ENCODE measurements at regions of chr1 and their contacts with region 1.

Region 1: GRCh38 chr1:66446261-66447001 is 87.5 kb upstream of the SGIP1 start:
- DNase-seq: peak; percentile 45
- ATAC-seq: peak; percentile 60
- H3K4me3 Mint-ChIP-seq: peak overlapping the region; percentile 64
- H3K27ac Mint-ChIP-seq: peak overlapping the region; percentile 97
- H3K4me1 Mint-ChIP-seq: peaks cover 33% of the 10 kb centered on the region
- H3K27me3 Mint-ChIP-seq: peaks cover 7% of the 10 kb centered on the region

Region 2: DNA sequence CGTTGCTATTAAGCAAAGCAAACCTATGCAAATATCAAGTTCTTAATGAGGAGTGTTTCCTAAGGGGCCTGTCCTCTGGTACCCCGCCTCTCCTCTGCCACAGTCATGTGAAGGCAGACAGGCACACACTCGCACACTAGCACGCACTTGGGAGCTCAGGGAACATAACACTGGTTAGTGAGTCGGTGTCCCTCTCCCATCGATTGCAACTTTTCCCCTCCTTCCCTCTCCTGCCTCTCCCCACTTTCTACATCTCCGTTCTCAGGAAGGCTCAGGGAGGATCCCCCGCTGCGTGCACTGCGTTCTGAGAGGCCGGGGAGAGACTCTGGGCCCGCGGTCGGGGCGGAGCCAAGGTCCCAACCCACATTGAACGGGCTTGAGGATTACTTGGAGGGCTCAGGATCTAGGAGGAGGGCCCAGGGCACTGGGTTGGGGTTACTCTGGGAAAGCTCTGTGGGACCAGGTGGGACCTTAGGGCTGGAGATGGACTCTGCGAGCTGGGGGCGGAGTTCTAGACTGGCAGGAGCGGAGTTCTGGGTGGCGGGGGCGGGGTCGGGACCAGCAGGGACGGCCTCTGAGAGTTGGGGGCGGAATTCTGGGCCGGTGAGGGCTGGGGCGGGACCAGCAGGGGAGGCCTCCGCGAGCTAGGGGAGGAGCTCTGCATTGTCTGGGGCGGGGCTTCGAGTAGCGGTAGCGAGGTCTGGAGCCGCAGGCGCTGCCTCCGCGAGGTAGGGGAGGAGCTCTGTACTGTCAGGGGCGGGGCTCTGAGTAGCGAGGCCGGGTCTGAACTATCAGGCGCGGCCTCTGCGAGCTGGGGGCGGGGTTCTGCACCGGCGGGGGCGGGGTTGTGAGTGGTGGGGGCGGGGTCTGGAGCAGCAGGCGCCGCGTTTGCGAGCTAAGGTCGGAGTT is 1026.5 kb before region 1 on chr1:
- CTCF ChIA-PET with region 1: no interaction called
- POLR2A ChIA-PET with region 1: no interaction called
- intact Hi-C with region 1: loop called in 1 of 2 experiments (anchors 10 kb)
- DNase-seq: peak; percentile 99
- ATAC-seq: peak; percentile 96
- H3K4me3 Mint-ChIP-seq: no peak overlapping the region
- H3K27ac Mint-ChIP-seq: peak overlapping the region; percentile 94
- H3K4me1 Mint-ChIP-seq: peaks cover 13% of the 10 kb centered on the region
- H3K27me3 Mint-ChIP-seq: no peaks in the 10 kb centered on the region

Region 3: DNA sequence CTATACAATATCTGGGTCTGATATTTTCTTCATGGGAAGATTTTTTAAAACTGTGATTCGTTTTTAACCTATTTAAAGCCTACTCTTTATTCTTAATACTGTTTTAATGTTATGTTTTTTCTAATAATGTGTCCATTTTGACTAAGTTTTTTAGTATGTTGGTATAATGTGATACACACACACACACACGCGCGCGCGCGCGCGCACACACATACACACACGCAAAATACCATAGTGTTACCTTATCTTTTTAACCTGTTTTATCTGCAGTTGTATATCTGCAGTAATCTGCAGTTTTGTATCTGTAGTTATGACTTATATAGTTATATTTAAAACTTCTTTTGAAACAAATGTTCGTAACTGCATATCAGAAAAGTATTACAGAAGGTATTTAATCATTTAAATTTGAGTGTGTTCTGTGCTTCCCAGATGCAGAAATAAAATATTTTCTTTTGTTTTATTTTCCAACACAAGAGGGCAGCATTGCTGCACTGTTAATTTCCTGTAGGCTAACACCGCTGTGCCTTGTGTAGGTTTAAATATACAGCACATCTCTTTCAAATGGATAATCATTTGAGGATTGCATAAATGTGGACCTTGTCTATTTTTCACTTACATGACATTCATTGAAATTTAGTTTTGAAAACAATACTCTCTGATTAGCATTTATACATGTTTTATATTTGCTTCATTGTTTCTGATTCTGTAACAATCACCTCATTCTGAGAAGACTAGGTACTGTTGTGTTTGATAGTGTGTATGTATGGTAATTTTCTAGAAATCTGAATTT is 487.7 kb before region 1 on chr1:
- CTCF ChIA-PET with region 1: interaction called, 22 read pairs
- POLR2A ChIA-PET with region 1: no interaction called
- intact Hi-C with region 1: loop called (anchors 1 kb)
- DNase-seq: peak; percentile 23
- ATAC-seq: peak; percentile 70
- H3K4me3 Mint-ChIP-seq: no peak overlapping the region
- H3K27ac Mint-ChIP-seq: no peak overlapping the region
- H3K4me1 Mint-ChIP-seq: no peaks in the 10 kb centered on the region
- H3K27me3 Mint-ChIP-seq: no peaks in the 10 kb centered on the region

Region 4: GRCh38 chr1:66258404-66259105 is 187.9 kb before region 1 on chr1:
- CTCF ChIA-PET with region 1: interaction called, 359 read pairs
- POLR2A ChIA-PET with region 1: interaction called, 4 read pairs
- intact Hi-C with region 1: loop called (anchors 1 kb)
- DNase-seq: no peak
- ATAC-seq: peak; percentile 91
- H3K4me3 Mint-ChIP-seq: no peak overlapping the region
- H3K27ac Mint-ChIP-seq: peak overlapping the region; percentile 68
- H3K4me1 Mint-ChIP-seq: peaks cover 90% of the 10 kb centered on the region
- H3K27me3 Mint-ChIP-seq: no peaks in the 10 kb centered on the region

Region 5: GRCh38 chr1:66331657-66332547 is 114.5 kb before region 1 on chr1:
- CTCF ChIA-PET with region 1: interaction called, 15 read pairs
- POLR2A ChIA-PET with region 1: interaction called, 4 read pairs
- intact Hi-C with region 1: loop called (anchors 2 kb)
- DNase-seq: peak; percentile 75
- ATAC-seq: peak; percentile 40
- H3K4me3 Mint-ChIP-seq: peak overlapping the region; percentile 91
- H3K27ac Mint-ChIP-seq: peak overlapping the region; percentile 98
- H3K4me1 Mint-ChIP-seq: peaks cover 44% of the 10 kb centered on the region
- H3K27me3 Mint-ChIP-seq: no peaks in the 10 kb centered on the region

Region 6: DNA sequence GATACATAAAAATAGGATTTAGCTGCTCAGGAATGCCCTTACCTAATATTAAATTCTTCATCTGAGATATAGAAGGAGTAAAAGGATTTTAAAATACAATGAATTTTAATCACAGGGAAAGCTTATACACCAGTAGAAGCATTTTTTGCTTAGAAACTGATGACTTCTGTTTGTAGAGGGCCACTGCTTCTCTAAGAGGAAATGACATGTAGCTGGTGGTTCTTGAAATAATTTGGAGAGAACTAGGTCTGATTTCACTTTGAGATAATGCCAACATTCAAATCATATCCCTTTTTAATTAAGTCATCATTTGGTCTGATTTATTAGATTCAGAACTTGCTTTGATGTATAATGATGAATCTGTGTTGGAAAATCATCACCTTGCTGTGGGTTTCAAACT is 79.1 kb before region 1 on chr1:
- CTCF ChIA-PET with region 1: interaction called, 21 read pairs
- POLR2A ChIA-PET with region 1: interaction called, 4 read pairs
- intact Hi-C with region 1: loop called in 1 of 2 experiments (anchors 2 kb)
- DNase-seq: no peak
- ATAC-seq: no peak
- H3K4me3 Mint-ChIP-seq: peak overlapping the region; percentile 6
- H3K27ac Mint-ChIP-seq: peak overlapping the region; percentile 75
- H3K4me1 Mint-ChIP-seq: peaks cover 84% of the 10 kb centered on the region
- H3K27me3 Mint-ChIP-seq: no peaks in the 10 kb centered on the region